Naive thymus-derived CD8-positive, alpha-beta T cell (primary cell): ENCODE measurements at regions of chr5 and their contacts with region 1.

Region 1: DNA sequence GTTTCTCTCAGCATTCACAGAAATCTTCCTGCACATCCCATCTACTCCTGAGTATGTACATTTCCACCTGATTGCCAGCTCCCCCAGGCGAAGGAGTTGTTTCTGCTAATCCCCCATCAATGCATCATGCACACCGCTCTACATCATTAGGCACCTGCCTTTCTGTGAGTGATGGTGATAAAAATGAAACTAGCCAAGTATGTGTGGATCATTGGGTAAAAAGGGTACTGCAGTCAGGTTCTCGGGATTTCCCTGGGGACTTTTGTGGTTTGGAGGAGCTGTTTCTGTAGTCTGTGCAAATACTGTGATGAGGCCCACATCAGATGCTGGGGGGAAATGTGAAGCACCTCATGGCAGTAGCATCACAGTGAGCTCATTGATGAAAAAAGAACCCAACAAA is 30.4 kb downstream of the CAMK4 start:
- DNase-seq: peak in 7 of 10 donors; percentile 31 to 79 (median 52)
- ATAC-seq: peak; percentile 88 to 92
- H3K4me3 Mint-ChIP-seq: peak overlapping the region; percentile 36 to 80 (median 62)
- H3K27ac Mint-ChIP-seq: peak overlapping the region; percentile 60 to 94 (median 93)
- H3K4me1 Mint-ChIP-seq: peaks cover 35 to 87% (median 80%) of the 10 kb centered on the region in 4 donors
- H3K27me3 Mint-ChIP-seq: no peaks in the 10 kb centered on the region

Region 2: DNA sequence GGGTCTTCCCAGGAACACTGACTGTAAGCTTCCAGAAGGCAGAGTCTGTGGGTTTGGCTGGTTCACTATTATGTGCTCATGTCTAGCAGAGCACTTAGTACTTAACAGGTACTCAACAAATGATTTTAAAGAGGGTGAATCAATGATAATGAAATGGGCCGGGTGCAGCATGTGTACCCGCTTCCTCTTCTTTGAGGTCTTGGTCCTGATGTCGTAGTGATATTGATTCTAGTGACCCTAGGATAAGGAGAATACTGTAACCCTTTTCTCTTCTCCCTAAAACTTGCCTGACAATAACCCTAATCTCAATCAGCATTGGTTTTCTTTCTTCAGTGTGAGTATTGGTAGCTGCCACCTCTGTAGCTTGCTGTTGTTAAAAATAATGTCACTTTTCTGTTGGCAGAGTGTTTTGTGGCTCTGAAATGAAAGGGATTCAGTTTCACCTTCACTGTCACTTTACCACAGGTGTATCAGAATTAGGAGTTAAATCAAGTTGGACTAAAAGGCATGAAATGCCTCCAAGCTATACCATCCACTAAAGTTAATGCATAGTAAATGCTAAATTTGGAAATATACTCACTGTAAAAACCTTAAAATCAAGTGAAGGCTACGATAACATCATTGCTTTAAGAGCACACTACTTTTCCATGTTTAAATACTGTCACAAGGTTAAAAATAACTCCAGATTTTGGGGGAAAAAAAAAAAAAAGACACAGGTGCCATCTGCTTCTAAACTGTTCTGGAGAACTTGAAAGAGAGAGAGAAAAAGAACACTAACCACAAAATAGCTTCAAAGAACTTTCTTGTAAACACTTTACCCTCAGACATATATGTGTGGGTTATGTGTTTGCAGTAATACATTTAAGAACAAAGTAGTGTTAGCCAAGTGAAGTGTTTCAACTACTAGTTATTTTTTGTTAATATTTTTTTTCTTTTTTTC is 24.5 kb before region 1 on chr5:
- POLR2A ChIA-PET with region 1: interaction called, 13 read pairs
- DNase-seq: peak in 3 of 10 donors; percentile 72 to 83 (median 82)
- ATAC-seq: peak; percentile 36 to 66
- H3K4me3 Mint-ChIP-seq: peak overlapping the region; percentile 68 to 96 (median 90)
- H3K27ac Mint-ChIP-seq: peak overlapping the region; percentile 87 to 100 (median 98)
- H3K4me1 Mint-ChIP-seq: peaks cover 45 to 94% (median 68%) of the 10 kb centered on the region in 4 donors
- H3K27me3 Mint-ChIP-seq: peaks cover 0 to 2% (median 0%) of the 10 kb centered on the region in 5 donors